ENCODE measurements at regions of chr1 and their contacts with region 1.

Region 1: DNA sequence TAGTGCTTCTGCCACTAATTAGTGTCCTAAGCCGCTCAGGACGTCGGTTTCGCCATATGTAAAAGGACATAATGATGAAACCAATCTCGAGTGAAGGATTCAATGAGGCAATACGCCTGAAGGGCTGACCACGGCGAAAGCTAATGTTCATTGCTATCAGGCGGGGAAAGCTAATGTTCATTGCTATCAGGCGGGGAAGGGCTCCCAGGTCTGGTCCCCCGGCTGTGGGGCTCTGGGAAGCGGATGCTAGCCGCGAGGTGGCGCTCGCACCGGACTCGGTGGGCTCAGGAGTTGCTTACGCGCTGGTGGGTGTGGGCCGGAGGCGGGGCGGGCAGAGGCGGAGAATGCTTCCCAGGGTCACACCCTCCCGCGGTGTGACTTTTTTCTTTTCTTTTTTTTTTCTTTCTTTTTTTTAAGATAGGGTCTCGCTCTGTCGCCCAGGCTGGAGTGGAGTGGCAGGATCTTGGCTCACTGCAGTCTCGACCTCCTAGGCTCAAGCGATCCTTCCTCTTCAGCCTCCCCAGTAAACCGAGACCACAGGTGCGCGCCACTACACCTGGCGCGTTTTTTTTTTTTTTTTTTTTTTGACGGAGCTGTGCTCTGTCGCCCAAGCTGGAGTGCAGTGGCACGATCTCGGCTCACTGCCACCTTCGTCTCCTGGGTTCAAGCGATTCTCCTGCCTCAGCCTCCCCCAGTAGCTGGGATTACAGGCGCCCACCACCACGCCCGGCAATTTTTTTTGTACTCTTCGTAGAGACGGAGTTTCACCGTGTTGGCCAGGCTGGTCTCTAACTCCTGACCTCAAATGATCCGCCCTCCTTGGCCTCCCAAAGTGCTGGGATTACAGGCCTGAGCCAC is 1.1 kb upstream of the PEAR1 start:
- DNase-seq: peak; percentile 88
- H3K4me3 Mint-ChIP-seq: peak overlapping the region; percentile 56
- H3K27ac Mint-ChIP-seq: no peak overlapping the region
- H3K4me1 Mint-ChIP-seq: peaks cover 26% of the 10 kb centered on the region
- H3K27me3 Mint-ChIP-seq: peaks cover 18% of the 10 kb centered on the region
- CTCF ChIP-seq: peak; percentile 94

Region 2: DNA sequence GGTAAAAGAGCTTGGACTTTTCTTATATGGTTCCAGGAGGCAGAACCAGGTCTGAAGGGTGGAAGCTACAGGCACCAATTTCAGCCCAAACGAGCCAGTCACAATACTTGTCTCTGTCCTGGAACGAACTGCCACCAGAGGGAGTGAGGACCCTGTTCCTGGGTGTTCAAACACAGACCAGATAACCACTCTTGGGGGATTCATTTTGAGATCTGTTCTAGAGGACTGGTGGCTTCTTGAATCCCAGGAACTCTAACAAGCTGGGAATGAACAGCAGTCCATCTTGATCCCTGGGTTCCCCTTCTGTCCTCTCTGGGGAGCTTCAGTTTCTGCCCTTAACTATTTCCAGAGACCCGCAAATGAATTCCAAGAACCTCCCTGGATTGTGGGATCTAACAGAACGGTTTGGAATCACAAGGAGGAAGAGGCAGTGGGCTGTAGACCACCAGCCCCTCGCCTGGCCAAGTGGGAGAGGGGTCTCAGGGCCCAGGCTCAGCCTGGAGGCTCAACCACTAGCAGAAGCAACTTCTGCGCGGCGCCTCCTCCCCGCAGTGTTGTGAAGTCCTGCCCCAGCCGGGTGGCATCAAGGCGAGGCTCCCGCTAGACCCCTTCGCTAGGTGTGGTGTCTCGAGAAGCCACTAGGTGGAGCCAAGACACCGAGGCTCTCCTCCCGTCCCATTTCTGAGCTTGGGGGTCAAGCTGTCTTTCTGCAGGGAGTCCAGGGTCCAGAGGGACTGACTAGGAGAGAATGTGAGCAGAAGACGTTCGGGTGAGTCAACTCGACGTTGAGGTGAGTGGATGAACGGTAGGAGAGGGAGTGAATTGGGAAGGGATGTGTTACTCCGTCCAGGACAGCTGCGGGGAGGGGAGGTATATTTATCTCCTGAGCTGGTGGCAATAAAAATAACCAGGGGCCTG is 203.1 kb before region 1 on chr1:
- CTCF ChIA-PET with region 1: interaction called, 47 read pairs
- POLR2A ChIA-PET with region 1: no interaction called
- intact Hi-C with region 1: loop called (anchors 1 kb)
- DNase-seq: peak; percentile 92
- H3K4me3 Mint-ChIP-seq: no peak overlapping the region
- H3K27ac Mint-ChIP-seq: no peak overlapping the region
- H3K4me1 Mint-ChIP-seq: peaks cover 32% of the 10 kb centered on the region
- H3K27me3 Mint-ChIP-seq: peaks cover 37% of the 10 kb centered on the region
- CTCF ChIP-seq: peak; percentile 97

Region 3: DNA sequence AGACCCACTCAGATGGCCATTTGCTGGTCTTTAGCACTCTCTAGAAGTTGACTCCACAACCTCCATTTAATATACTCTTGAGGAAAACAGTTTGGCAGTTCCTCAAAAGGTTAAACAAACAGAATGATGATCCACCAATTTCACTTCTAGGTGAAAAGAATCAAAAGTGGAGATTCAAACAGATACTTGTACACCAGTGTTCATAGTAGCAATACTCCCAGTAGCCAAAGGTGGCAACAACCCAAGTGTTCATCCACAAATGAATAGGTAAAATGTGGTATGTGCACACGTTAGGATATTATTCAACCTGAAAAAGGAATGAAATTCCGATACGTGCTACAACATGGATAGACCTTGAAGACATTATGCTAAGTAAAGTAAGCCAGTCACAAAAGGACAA is 118.8 kb before region 1 on chr1:
- CTCF ChIA-PET with region 1: interaction called, 20 read pairs
- POLR2A ChIA-PET with region 1: no interaction called
- intact Hi-C with region 1: no loop called
- DNase-seq: no peak
- H3K4me3 Mint-ChIP-seq: no peak overlapping the region
- H3K27ac Mint-ChIP-seq: no peak overlapping the region
- H3K4me1 Mint-ChIP-seq: peaks cover 65% of the 10 kb centered on the region
- H3K27me3 Mint-ChIP-seq: no peaks in the 10 kb centered on the region
- CTCF ChIP-seq: no peak

Region 4: GRCh38 chr1:156821801-156822200 is 70.6 kb before region 1 on chr1:
- CTCF ChIA-PET with region 1: interaction called, 55 read pairs
- POLR2A ChIA-PET with region 1: interaction called, 3 read pairs
- intact Hi-C with region 1: no loop called
- DNase-seq: peak; percentile 41
- H3K4me3 Mint-ChIP-seq: no peak overlapping the region
- H3K27ac Mint-ChIP-seq: no peak overlapping the region
- H3K4me1 Mint-ChIP-seq: peaks cover 18% of the 10 kb centered on the region
- H3K27me3 Mint-ChIP-seq: no peaks in the 10 kb centered on the region
- CTCF ChIP-seq: no peak

Region 5: DNA sequence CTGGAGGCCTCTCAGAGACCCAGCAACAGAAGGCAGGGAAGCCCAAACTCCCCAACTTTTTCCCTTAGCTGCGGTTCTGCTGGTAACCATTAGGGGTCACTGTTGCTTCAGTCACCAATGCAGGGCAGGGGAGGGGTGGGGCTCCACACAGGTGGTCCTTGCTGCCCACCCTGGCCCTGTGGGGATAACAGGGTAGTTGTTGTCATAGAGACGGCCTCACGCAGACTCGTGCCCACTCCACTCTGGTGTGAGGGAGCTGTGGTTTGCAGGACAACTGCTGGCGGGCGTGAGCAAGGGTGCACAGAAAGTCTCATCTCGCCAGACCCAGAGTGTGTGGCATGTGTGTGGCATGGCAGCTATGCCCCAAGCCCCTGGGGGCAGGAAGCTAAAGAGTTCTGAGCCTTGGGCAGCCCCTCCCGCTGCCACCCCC is 53.4 kb before region 1 on chr1:
- CTCF ChIA-PET with region 1: interaction called, 284 read pairs
- POLR2A ChIA-PET with region 1: no interaction called
- intact Hi-C with region 1: loop called (anchors 1 kb)
- DNase-seq: peak; percentile 60
- H3K4me3 Mint-ChIP-seq: no peak overlapping the region
- H3K27ac Mint-ChIP-seq: no peak overlapping the region
- H3K4me1 Mint-ChIP-seq: no peaks in the 10 kb centered on the region
- H3K27me3 Mint-ChIP-seq: peaks cover 32% of the 10 kb centered on the region
- CTCF ChIP-seq: peak; percentile 93

Region 6: GRCh38 chr1:156866249-156866909 is 26.0 kb before region 1 on chr1:
- CTCF ChIA-PET with region 1: interaction called, 163 read pairs
- POLR2A ChIA-PET with region 1: interaction called, 3 read pairs
- intact Hi-C with region 1: no loop called
- DNase-seq: no peak
- H3K4me3 Mint-ChIP-seq: no peak overlapping the region
- H3K27ac Mint-ChIP-seq: no peak overlapping the region
- H3K4me1 Mint-ChIP-seq: peaks cover 23% of the 10 kb centered on the region
- H3K27me3 Mint-ChIP-seq: peaks cover 18% of the 10 kb centered on the region
- CTCF ChIP-seq: no peak

Region 7: GRCh38 chr1:156927215-156928042 is 35.0 kb after region 1 on chr1:
- CTCF ChIA-PET with region 1: interaction called, 363 read pairs
- POLR2A ChIA-PET with region 1: interaction called, 28 read pairs
- intact Hi-C with region 1: loop called (anchors 1 kb)
- DNase-seq: peak; percentile 91
- H3K4me3 Mint-ChIP-seq: peak overlapping the region; percentile 41
- H3K27ac Mint-ChIP-seq: no peak overlapping the region
- H3K4me1 Mint-ChIP-seq: peaks cover 33% of the 10 kb centered on the region
- H3K27me3 Mint-ChIP-seq: peaks cover 58% of the 10 kb centered on the region
- CTCF ChIP-seq: peak; percentile 97